Activated CD8-positive, alpha-beta T cell treated with anti-CD3 and anti-CD28 coated beads for 36 hours (primary cell): ENCODE measurements at regions of chr5 and their contacts with region 1.

Region 1: DNA sequence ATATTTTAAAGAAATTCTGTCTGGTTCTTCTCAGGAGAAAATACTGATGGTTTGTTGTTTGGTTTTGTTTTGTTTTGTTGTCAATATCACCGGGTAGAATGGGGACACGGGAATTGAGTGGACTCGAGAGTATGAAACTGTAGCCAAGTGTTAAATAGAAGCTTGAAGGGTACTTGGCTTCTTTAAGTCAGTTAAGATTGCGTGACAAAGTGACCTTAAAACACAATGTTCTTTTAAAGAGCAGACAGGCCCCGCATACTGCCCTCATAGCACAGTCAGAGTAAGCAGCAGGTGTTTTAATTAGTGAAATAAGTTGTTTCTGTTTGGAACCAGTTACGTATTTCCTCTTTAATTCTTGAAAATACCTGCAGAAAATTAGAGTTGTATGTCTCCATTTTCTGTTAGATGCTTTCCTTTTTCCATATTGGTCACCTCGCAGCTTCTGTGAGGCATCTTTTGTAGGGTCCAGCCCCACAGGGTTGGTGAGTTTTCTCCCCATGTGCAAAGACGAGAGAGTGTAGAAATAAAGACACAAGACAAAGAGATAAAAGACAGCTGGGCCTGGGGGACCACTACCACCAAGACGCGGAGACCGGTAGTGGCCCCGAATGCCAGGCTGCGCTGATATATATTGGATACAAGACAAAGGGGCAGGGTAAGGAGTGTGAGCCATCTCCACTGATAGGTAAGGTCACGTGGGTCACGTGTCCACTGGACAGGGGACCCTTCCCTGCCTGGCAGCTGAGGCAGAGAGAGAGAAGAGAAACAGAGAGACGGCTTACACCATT is 9.6 kb downstream of the TRIP13 start:
- DNase-seq: no peak
- ATAC-seq: no peak
- H3K4me3 Mint-ChIP-seq: no peak overlapping the region
- H3K27ac Mint-ChIP-seq: no peak overlapping the region
- H3K4me1 Mint-ChIP-seq: no peaks in the 10 kb centered on the region
- H3K27me3 Mint-ChIP-seq: no peaks in the 10 kb centered on the region
- CTCF ChIP-seq: no peak

Region 2: GRCh38 chr5:431001-431710 is 471.2 kb before region 1 on chr5:
- CTCF ChIA-PET with region 1: no interaction called
- POLR2A ChIA-PET with region 1: no interaction called
- intact Hi-C with region 1: no loop called
- DNase-seq: peak; percentile 58
- ATAC-seq: peak; percentile 93
- H3K4me3 Mint-ChIP-seq: no peak overlapping the region
- H3K27ac Mint-ChIP-seq: no peak overlapping the region
- H3K4me1 Mint-ChIP-seq: peaks cover 10% of the 10 kb centered on the region
- H3K27me3 Mint-ChIP-seq: peaks cover 6% of the 10 kb centered on the region
- CTCF ChIP-seq: peak; percentile 87

Region 3: GRCh38 chr5:671459-672328 is 230.6 kb before region 1 on chr5:
- CTCF ChIA-PET with region 1: interaction called, 5 read pairs
- POLR2A ChIA-PET with region 1: no interaction called
- intact Hi-C with region 1: loop called (anchors 5 kb)
- DNase-seq: peak; percentile 80
- ATAC-seq: peak; percentile 87
- H3K4me3 Mint-ChIP-seq: no peak overlapping the region
- H3K27ac Mint-ChIP-seq: no peak overlapping the region
- H3K4me1 Mint-ChIP-seq: peaks cover 12% of the 10 kb centered on the region
- H3K27me3 Mint-ChIP-seq: peaks cover 7% of the 10 kb centered on the region
- CTCF ChIP-seq: peak; percentile 88

Region 4: GRCh38 chr5:982377-983237 is 80.3 kb after region 1 on chr5:
- CTCF ChIA-PET with region 1: no interaction called
- POLR2A ChIA-PET with region 1: no interaction called
- intact Hi-C with region 1: no loop called
- DNase-seq: no peak
- ATAC-seq: peak; percentile 39
- H3K4me3 Mint-ChIP-seq: no peak overlapping the region
- H3K27ac Mint-ChIP-seq: no peak overlapping the region
- H3K4me1 Mint-ChIP-seq: peaks cover 15% of the 10 kb centered on the region
- H3K27me3 Mint-ChIP-seq: peaks cover 12% of the 10 kb centered on the region
- CTCF ChIP-seq: no peak

Region 5: GRCh38 chr5:997001-997474 is 94.7 kb after region 1 on chr5:
- CTCF ChIA-PET with region 1: no interaction called
- POLR2A ChIA-PET with region 1: no interaction called
- intact Hi-C with region 1: no loop called
- DNase-seq: peak; percentile 59
- ATAC-seq: peak; percentile 86
- H3K4me3 Mint-ChIP-seq: no peak overlapping the region
- H3K27ac Mint-ChIP-seq: no peak overlapping the region
- H3K4me1 Mint-ChIP-seq: peaks cover 14% of the 10 kb centered on the region
- H3K27me3 Mint-ChIP-seq: peaks cover 2% of the 10 kb centered on the region
- CTCF ChIP-seq: no peak